ENCODE measurements at regions of chr17 and their contacts with region 1.

Region 1: DNA sequence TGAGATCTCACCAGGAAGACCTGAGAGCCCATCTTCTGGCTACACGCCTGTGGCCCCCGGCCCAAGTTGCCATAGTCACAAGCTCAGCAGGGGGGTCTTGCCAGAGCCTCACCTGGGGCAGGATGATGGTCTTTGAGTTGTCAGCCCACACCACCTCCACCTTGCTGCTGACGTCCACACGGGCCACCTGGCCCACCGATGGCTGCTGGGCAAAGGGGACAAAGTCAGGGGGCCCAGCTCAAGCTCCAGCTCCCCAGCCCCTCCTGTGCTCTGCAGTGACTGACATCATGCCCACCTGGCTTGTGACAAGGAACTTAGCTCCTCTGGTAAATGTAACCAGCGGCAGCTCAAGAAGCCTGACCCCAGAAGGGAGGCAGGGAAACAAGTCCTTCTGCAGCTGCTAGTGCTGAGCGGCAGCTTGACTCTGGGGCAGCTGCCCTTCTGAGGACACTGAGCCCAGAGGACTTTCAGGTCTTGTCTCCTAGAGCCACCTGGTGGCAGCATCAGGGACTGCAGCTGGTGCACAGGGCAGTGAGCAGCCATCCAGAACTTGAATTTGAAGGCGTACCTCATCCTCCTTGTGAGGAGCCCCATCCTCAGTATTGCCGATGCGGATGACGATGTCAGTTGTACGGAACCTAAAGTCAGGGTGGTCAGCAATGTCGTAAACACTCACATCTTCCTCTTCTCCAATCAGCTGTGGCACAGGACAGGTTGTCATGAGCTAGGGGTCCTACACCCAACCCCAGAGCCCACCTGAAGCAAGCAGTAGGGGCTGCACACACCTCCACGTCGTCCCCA is 13.5 kb downstream of the SPHK1 start:
- DNase-seq: peak; percentile 62 to 87 (median 76)
- ATAC-seq: peak; percentile 88
- H3K4me3 ChIP-seq: no peak overlapping the region
- H3K4me3 Mint-ChIP-seq: no peak overlapping the region
- H3K27ac ChIP-seq: no peak overlapping the region
- H3K27ac Mint-ChIP-seq: peak overlapping the region in 1 of 9 donors; percentile 38
- H3K4me1 ChIP-seq: no peaks in the 10 kb centered on the region
- H3K4me1 Mint-ChIP-seq: peaks cover 0 to 5% (median 0%) of the 10 kb centered on the region in 7 donors
- H3K27me3 ChIP-seq: no peaks in the 10 kb centered on the region
- H3K27me3 Mint-ChIP-seq: no peaks in the 10 kb centered on the region

Region 2: GRCh38 chr17:76304226-76305134 is 93.4 kb before region 1 on chr17:
- CTCF ChIA-PET with region 1: interaction called, 73 read pairs
- POLR2A ChIA-PET with region 1: interaction called, 3 read pairs
- intact Hi-C with region 1: loop called (anchors 1 kb)
- DNase-seq: no peak
- ATAC-seq: no peak
- H3K4me3 ChIP-seq: no peak overlapping the region
- H3K4me3 Mint-ChIP-seq: no peak overlapping the region
- H3K27ac ChIP-seq: no peak overlapping the region
- H3K27ac Mint-ChIP-seq: no peak overlapping the region
- H3K4me1 ChIP-seq: no peaks in the 10 kb centered on the region
- H3K4me1 Mint-ChIP-seq: no peaks in the 10 kb centered on the region
- H3K27me3 ChIP-seq: no peaks in the 10 kb centered on the region
- H3K27me3 Mint-ChIP-seq: no peaks in the 10 kb centered on the region

Region 3: GRCh38 chr17:76384222-76384986 is 13.5 kb before region 1 on chr17 and contains the start of gene SPHK1:
- CTCF ChIA-PET with region 1: interaction called, 18 read pairs
- POLR2A ChIA-PET with region 1: interaction called, 4 read pairs
- intact Hi-C with region 1: no loop called
- DNase-seq: peak in 7 of 9 donors; percentile 23 to 87 (median 42)
- ATAC-seq: peak; percentile 68
- H3K4me3 ChIP-seq: peak within 1 kb of the TSS; percentile 63
- H3K4me3 Mint-ChIP-seq: peak within 1 kb of the TSS; percentile 86 to 94 (median 92)
- H3K27ac ChIP-seq: no peak within 1 kb of the TSS
- H3K27ac Mint-ChIP-seq: peak within 1 kb of the TSS; percentile 18 to 88 (median 67)
- H3K4me1 ChIP-seq: peaks cover 0 to 15% of the 10 kb centered on the region in 2 donors
- H3K4me1 Mint-ChIP-seq: peaks cover 4 to 17% (median 11%) of the 10 kb centered on the region in 7 donors
- H3K27me3 ChIP-seq: no peaks in the 10 kb centered on the region
- H3K27me3 Mint-ChIP-seq: peaks cover 0 to 2% (median 0%) of the 10 kb centered on the region in 5 donors
- total RNA-seq, gene SPHK1: 0.43 to 14.1 (median 1.9) TPM

Region 4: DNA sequence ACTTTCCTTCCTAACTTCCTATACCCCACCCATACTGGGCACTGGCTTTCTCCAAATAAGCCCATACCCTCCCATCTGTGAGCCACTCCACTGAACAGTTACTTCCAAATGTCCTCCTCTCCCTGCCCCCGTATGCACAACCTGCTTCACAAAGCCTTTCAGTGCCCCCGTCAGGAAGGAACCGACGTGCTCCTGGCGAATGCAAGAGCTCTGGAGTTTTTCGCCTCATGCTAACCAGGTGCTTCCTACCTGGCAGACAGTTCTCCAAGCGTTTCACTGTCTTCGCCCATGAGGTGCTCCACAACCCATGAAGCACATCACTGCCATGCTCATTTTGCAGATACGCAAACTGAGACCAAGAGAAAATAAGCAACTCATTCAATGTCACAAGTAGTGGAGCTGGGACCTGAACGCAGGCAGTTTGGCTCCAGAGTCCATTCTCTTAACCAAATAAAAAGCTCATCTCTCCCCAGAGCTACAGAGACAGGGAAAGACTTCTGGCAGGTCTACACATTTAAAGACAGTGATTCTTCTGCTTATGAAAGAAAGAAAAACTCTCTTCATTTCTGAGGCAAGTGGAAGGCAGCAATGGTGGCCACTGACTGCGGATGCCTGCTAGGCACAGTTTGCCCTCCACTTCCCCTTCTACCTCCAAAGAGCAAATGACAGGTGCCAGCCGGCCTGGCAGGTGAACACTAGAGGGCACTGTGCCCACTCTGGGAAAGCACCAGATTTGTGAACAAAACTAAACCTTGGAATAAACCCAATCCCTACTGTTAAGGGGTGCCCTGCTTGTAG is 10.4 kb after region 1 on chr17:
- CTCF ChIA-PET with region 1: interaction called, 15 read pairs
- POLR2A ChIA-PET with region 1: interaction called, 3 read pairs
- intact Hi-C with region 1: no loop called
- DNase-seq: peak; percentile 48 to 72 (median 65)
- ATAC-seq: peak; percentile 89
- H3K4me3 ChIP-seq: no peak overlapping the region
- H3K4me3 Mint-ChIP-seq: no peak overlapping the region
- H3K27ac ChIP-seq: no peak overlapping the region
- H3K27ac Mint-ChIP-seq: peak overlapping the region in 6 of 9 donors; percentile 25 to 75 (median 61)
- H3K4me1 ChIP-seq: no peaks in the 10 kb centered on the region
- H3K4me1 Mint-ChIP-seq: peaks cover 9 to 14% (median 11%) of the 10 kb centered on the region in 7 donors
- H3K27me3 ChIP-seq: no peaks in the 10 kb centered on the region
- H3K27me3 Mint-ChIP-seq: no peaks in the 10 kb centered on the region

Measured in naive thymus-derived CD4-positive, alpha-beta T cell (primary cell).